ENCODE measurements at regions of chr1 and their contacts with region 1.

Region 1: GRCh38 chr1:59759156-59759925 is 55.4 kb upstream of the HOOK1 start:
- DNase-seq: peak; percentile 77
- ATAC-seq: peak; percentile 95
- H3K4me3 Mint-ChIP-seq: peak overlapping the region; percentile 46
- H3K27ac Mint-ChIP-seq: no peak overlapping the region
- H3K4me1 Mint-ChIP-seq: peaks cover 4% of the 10 kb centered on the region; the same call in 1 of the 2 replicates
- H3K27me3 Mint-ChIP-seq: 0 out of 2 replicates have a peak, but pooled peaks cover 6% of the 10 kb centered on the region
- CTCF ChIP-seq: peak; percentile 90

Region 2: GRCh38 chr1:58739856-58740466 is 1019.4 kb before region 1 on chr1:
- CTCF ChIA-PET with region 1: interaction called, 11 read pairs
- POLR2A ChIA-PET with region 1: no interaction called
- DNase-seq: no peak
- ATAC-seq: no peak
- H3K4me3 Mint-ChIP-seq: no peak overlapping the region
- H3K27ac Mint-ChIP-seq: no peak overlapping the region
- H3K4me1 Mint-ChIP-seq: 0 out of 2 replicates have a peak, but pooled peaks cover 4% of the 10 kb centered on the region
- H3K27me3 Mint-ChIP-seq: no peaks in the 10 kb centered on the region
- CTCF ChIP-seq: peak; percentile 60

Region 3: GRCh38 chr1:59699227-59699847 is 60.0 kb before region 1 on chr1:
- CTCF ChIA-PET with region 1: interaction called, 16 read pairs
- POLR2A ChIA-PET with region 1: no interaction called
- DNase-seq: no peak
- ATAC-seq: peak; percentile 43; the same call in 1 of the 2 replicates
- H3K4me3 Mint-ChIP-seq: no peak overlapping the region
- H3K27ac Mint-ChIP-seq: no peak overlapping the region
- H3K4me1 Mint-ChIP-seq: peaks cover 28% of the 10 kb centered on the region
- H3K27me3 Mint-ChIP-seq: no peaks in the 10 kb centered on the region
- CTCF ChIP-seq: peak; percentile 92

Measured in WTC11 (cell line).